ENCODE measurements at regions of chr9 and their contacts with region 1.

Region 1: GRCh38 chr9:35696525-35697215 is 6.9 kb upstream of the TPM2 start:
- DNase-seq: peak; percentile 38 to 48 (median 46)
- H3K4me3 ChIP-seq: no peak overlapping the region
- H3K27ac ChIP-seq: no peak overlapping the region
- H3K4me1 ChIP-seq: no peaks in the 10 kb centered on the region
- H3K27me3 ChIP-seq: no peaks in the 10 kb centered on the region

Region 2: DNA sequence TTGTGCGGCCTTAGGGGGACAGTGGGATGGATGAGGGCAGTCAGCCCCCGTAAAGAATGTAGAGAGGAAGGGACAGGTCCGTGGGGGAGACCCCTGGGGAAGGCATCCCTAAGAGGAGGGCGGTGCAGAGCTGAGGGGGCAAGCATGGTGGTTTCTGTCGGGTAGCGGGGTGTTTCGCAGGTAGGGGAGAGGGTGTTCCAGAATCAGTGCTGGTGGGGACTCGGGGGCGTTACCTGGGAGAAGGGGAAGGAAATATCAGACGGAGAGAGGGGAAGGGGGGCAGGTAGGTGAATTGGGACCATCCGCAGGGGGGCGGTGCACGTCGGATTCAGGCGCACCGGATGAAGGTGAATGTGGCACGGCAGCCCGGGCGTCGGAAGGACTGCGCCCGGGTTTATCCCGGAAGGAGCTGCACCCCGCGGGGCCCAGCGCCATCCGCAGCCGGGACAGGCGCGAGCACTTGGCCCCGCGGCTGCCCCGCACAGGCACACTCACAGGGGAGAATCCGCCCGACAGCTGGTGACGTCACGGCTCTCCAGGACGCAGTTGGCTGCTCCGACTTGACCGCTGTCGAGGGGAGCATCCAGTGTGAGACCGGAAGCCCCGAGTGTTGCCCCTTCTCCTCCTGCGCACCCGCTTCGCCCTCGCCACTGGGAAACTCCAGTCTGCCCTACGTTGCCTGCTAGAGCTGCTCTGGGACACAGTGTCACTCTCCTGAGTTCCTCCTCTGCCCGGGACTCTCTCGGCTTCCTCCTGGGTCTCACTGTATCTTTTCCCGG is 79.8 kb before region 1 on chr9:
- CTCF ChIA-PET with region 1: interaction called, 12 read pairs
- POLR2A ChIA-PET with region 1: no interaction called
- DNase-seq: peak in 2 of 3 donors; percentile 53 to 66
- H3K4me3 ChIP-seq: peak overlapping the region; percentile 16 to 84 (median 67)
- H3K27ac ChIP-seq: no peak overlapping the region
- H3K4me1 ChIP-seq: peaks cover 0 to 49% (median 33%) of the 10 kb centered on the region in 4 experiments
- H3K27me3 ChIP-seq: no peaks in the 10 kb centered on the region

Region 3: GRCh38 chr9:35628389-35628991 is 68.2 kb before region 1 on chr9:
- CTCF ChIA-PET with region 1: no interaction called
- POLR2A ChIA-PET with region 1: no interaction called
- DNase-seq: no peak
- H3K4me3 ChIP-seq: no peak overlapping the region
- H3K27ac ChIP-seq: no peak overlapping the region
- H3K4me1 ChIP-seq: no peaks in the 10 kb centered on the region
- H3K27me3 ChIP-seq: no peaks in the 10 kb centered on the region

Region 4: DNA sequence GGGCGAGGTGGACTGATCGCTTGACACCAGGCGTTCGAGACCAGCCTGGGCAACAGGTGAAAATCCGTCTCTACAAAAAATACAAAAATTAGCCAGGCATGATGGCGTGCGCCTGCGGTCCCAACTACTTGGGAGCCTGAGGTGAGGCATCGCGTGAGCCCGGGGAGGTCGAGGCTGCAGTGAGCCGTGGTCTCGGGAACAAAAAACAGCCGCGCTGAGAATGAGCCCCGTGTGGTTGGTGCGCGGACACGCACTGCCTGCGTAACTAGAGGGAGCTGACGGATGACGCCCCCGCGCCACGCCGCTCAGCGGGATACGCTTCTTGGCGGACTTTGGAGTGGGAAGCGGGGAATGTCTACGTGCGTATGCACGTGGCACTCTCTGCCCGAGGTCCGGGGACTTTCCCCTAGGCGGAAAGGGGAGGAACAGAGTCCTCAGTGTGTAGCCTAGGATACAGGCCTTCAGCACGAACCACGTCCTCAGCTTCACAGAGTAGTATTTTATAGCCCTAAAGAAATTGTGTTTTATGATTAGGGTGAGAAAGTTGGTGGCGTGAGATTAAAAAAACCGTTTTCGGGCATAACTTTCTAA is 39.0 kb before region 1 on chr9 and contains the start of gene RMRP:
- CTCF ChIA-PET with region 1: interaction called, 49 read pairs
- POLR2A ChIA-PET with region 1: interaction called, 3 read pairs
- DNase-seq: peak; percentile 95 to 99 (median 96)
- H3K4me3 ChIP-seq: peak within 1 kb of the TSS; percentile 81 to 89 (median 84)
- H3K27ac ChIP-seq: peak within 1 kb of the TSS; percentile 100
- H3K4me1 ChIP-seq: peaks cover 11 to 55% (median 40%) of the 10 kb centered on the region in 4 experiments
- H3K27me3 ChIP-seq: no peaks in the 10 kb centered on the region

Region 5: DNA sequence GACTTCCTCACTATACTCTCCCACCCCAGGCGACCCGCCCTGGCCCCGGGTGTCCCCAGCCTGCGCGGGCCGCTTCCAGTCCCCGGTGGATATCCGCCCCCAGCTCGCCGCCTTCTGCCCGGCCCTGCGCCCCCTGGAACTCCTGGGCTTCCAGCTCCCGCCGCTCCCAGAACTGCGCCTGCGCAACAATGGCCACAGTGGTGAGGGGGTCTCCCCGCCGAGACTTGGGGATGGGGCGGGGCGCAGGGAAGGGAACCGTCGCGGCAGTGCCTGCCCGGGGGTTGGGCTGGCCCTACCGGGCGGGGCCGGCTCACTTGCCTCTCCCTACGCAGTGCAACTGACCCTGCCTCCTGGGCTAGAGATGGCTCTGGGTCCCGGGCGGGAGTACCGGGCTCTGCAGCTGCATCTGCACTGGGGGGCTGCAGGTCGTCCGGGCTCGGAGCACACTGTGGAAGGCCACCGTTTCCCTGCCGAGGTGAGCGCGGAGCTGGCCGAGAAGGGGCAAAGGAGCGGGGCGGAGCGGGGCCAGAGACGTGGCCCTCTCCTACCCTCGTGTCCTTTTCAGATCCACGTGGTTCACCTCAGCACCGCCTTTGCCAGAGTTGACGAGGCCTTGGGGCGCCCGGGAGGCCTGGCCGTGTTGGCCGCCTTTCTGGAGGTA is 20.8 kb before region 1 on chr9:
- CTCF ChIA-PET with region 1: interaction called, 27 read pairs
- POLR2A ChIA-PET with region 1: interaction called, 3 read pairs
- DNase-seq: peak; percentile 37 to 46 (median 46)
- H3K4me3 ChIP-seq: peak overlapping the region; percentile 15 to 81 (median 47)
- H3K27ac ChIP-seq: no peak overlapping the region
- H3K4me1 ChIP-seq: peaks cover 0 to 12% (median 8%) of the 10 kb centered on the region in 4 experiments
- H3K27me3 ChIP-seq: peaks cover 0 to 4% (median 0%) of the 10 kb centered on the region in 5 experiments

Region 6: DNA sequence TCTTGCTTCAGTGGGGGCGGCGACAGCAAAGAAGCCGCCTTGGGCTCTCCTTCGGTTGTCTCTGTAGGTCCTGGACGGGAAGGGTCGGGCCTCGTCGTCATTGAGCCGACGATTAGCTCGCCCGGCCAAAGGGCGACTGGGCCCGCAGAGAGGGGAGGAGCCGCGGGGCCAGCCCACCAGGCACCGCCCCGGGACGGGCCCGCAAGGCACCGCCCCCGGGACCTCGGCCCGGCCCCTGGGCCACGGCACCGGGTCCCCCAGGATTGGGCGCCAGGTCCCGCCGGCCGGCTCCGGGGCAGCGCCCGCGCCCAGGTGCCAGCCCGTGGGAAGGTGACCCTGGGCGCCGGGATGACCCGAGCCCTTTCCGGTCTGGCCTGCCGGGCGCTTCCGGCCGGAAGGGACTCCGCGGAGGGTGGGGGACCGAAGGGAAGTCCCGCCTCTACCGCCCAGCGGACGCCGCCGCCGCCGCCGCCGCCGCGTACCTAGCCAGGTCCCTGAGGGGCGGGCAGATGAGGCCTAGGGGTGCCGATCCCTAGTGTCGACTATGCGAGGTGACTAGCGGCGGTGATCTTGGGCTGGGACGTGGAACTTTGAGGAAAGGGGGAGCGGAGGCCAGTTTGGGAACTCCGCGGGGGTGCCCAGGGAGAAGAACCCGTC is 52.3 kb after region 1 on chr9 and contains the starts of genes GBA2 and RGP1:
- CTCF ChIA-PET with region 1: interaction called, 10 read pairs
- POLR2A ChIA-PET with region 1: no interaction called
- DNase-seq: peak; percentile 32 to 72 (median 60)
- H3K4me3 ChIP-seq: peak within 1 kb of the TSS; percentile 79 to 92 (median 86)
- H3K27ac ChIP-seq: peak within 1 kb of the TSS; percentile 18 to 84
- H3K4me1 ChIP-seq: peaks cover 10 to 39% (median 34%) of the 10 kb centered on the region in 4 experiments
- H3K27me3 ChIP-seq: no peaks in the 10 kb centered on the region

Region 7: DNA sequence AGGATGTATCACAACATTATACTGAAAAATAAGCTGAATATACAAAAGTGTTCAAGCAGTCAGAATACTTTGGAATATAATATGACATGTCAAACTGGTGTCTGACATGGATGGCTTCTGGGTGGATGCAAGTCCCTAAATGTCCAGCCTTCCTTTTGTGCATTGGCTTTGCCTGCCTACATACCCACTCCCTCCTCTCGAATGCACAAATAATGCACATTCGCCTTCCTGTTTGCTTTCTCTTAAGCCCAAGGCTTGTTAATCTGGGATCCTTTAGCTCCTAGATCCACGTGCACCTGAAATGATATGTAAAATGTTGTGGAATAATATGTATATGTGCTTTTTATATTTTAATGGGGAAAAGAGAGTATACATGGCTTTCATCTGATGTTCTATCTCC is 81.8 kb after region 1 on chr9:
- CTCF ChIA-PET with region 1: no interaction called
- POLR2A ChIA-PET with region 1: no interaction called
- DNase-seq: no peak
- H3K4me3 ChIP-seq: no peak overlapping the region
- H3K27ac ChIP-seq: no peak overlapping the region
- H3K4me1 ChIP-seq: peaks cover 13 to 17% (median 16%) of the 10 kb centered on the region in 4 experiments
- H3K27me3 ChIP-seq: no peaks in the 10 kb centered on the region